GM12878 (cell line): ENCODE measurements at regions of chr2 and their contacts with region 1.

Region 1: DNA sequence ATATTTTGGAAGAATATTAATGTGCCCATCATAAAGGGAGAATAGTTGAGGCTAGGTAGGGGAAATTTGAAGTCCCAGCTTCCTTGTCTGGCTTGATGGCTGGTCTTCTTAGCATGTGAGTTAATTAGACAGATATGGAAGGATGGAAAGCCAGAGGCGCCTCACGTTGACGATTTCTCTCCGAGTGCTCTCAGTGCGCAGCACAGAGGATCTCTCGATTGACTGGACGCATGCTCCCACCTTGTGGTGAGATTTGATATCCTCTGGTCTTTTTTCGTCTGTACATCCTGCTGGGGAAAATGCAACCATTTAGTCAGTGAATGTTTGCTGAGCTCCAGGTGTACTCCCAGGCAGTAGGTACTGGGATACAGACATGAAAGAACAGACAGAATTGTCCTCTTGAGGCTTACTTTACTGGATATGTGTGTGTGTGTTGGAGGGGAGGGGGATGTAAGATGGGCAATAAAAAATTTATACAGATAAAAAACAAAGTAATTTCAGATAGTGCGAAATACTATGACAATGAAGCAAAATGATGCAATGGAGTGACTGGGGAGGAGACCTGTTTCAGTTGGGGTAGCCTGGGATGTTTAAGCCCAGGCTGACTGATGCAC is 66.9 kb upstream of the ZNG1B start:
- DNase-seq: peak; percentile 23
- ATAC-seq: peak; percentile 96
- H3K4me3 ChIP-seq: no peak overlapping the region
- H3K27ac ChIP-seq: no peak overlapping the region
- H3K4me1 ChIP-seq: no peaks in the 10 kb centered on the region
- H3K27me3 ChIP-seq: no peaks in the 10 kb centered on the region; a peak in 1 of 4 replicates
- CTCF ChIP-seq: peak; percentile 44 to 61 (median 53); a peak in 5 of 6 replicates
- EP300 ChIP-seq: no peak
- POLR2A ChIP-seq: no peak
- RAD21 ChIP-seq: peak; percentile 73

Region 2: GRCh38 chr2:113291191-113291590 is 79.4 kb before region 1 on chr2:
- CTCF ChIA-PET with region 1: no interaction called
- POLR2A ChIA-PET with region 1: no interaction called
- RAD21 ChIA-PET with region 1: no interaction called
- SMC1A ChIA-PET with region 1: no interaction called
- in situ Hi-C with region 1: no loop called
- intact Hi-C with region 1: loop called (anchors 10 kb)
- DNase-seq: no peak
- ATAC-seq: no peak
- H3K4me3 ChIP-seq: no peak overlapping the region
- H3K27ac ChIP-seq: no peak overlapping the region
- H3K4me1 ChIP-seq: no peaks in the 10 kb centered on the region
- H3K27me3 ChIP-seq: peaks cover 0 to 4% of the 10 kb centered on the region in 2 experiments; a peak in 2 of 4 replicates
- CTCF ChIP-seq: no peak
- EP300 ChIP-seq: no peak
- POLR2A ChIP-seq: no peak
- RAD21 ChIP-seq: no peak